ENCODE measurements at regions of chr11 and their contacts with region 1.

Region 1: GRCh38 chr11:133134314-133135173 is 397.8 kb downstream of the OPCML start:
- DNase-seq: peak; percentile 39
- ATAC-seq: peak; percentile 96
- H3K4me3 ChIP-seq: no peak overlapping the region
- H3K27ac ChIP-seq: no peak overlapping the region
- H3K4me1 ChIP-seq: no peaks in the 10 kb centered on the region
- H3K27me3 ChIP-seq: no peaks in the 10 kb centered on the region
- CTCF ChIP-seq: peak; percentile 86
- EP300 ChIP-seq: no peak
- POLR2A ChIP-seq: no peak
- RAD21 ChIP-seq: no peak; the same call in 1 of the 2 replicates

Region 2: DNA sequence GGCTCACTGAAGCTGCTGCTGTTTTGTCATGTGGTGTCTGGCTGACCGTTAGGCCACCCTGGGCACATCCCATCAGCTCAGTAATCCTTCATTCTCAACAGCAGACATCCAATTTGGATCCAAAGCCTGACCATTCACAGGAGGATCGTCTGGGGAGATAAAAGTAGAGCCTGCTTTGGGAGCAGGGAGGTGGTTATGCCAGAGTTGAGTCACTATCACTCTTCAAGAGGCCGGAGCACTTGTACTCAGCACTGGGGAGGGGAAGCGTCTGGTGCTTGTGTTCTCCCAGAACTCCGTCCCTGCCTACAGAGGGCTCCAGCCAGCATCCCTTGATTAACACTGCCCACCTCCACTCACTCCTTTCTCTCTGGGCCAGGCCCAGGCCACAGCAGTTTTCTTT is 15.2 kb after region 1 on chr11:
- CTCF ChIA-PET with region 1: no interaction called
- POLR2A ChIA-PET with region 1: no interaction called
- in situ Hi-C with region 1: no loop called
- intact Hi-C with region 1: no loop called
- DNase-seq: no peak
- ATAC-seq: no peak
- H3K4me3 ChIP-seq: no peak overlapping the region
- H3K27ac ChIP-seq: no peak overlapping the region
- H3K4me1 ChIP-seq: no peaks in the 10 kb centered on the region
- H3K27me3 ChIP-seq: peaks cover 0 to 41% of the 10 kb centered on the region in 2 experiments; a peak in 3 of 5 replicates
- CTCF ChIP-seq: no peak
- EP300 ChIP-seq: no peak
- POLR2A ChIP-seq: no peak
- RAD21 ChIP-seq: no peak

Region 3: GRCh38 chr11:133821776-133822175 is 687.2 kb after region 1 on chr11:
- CTCF ChIA-PET with region 1: interaction called, 5 read pairs
- POLR2A ChIA-PET with region 1: no interaction called
- in situ Hi-C with region 1: loop called (anchors 10 kb)
- intact Hi-C with region 1: no loop called
- DNase-seq: peak; percentile 48
- ATAC-seq: peak; percentile 92
- H3K4me3 ChIP-seq: no peak overlapping the region
- H3K27ac ChIP-seq: no peak overlapping the region
- H3K4me1 ChIP-seq: no peaks in the 10 kb centered on the region
- H3K27me3 ChIP-seq: peaks cover 0 to under 1% of the 10 kb centered on the region in 2 experiments; a peak in 2 of 5 replicates
- CTCF ChIP-seq: peak; percentile 82
- EP300 ChIP-seq: no peak
- POLR2A ChIP-seq: no peak
- RAD21 ChIP-seq: peak; percentile 18; the same call in 1 of the 2 replicates

Measured in HepG2 (cell line).